Activated CD8-positive, alpha-beta T cell treated with anti-CD3 and anti-CD28 coated beads, Interleukin-2, amount 10 ng/mL, durations not matched to agents 7 days and 5 days (primary cell): ENCODE measurements at regions of chr5 and their contacts with region 1.

Region 1: GRCh38 chr5:131270809-131271208 is 7.0 kb downstream of the CDC42SE2 start:
- DNase-seq: no peak
- ATAC-seq: no peak
- H3K4me3 Mint-ChIP-seq: peak overlapping the region; percentile 73
- H3K27ac Mint-ChIP-seq: peak overlapping the region; percentile 80
- H3K4me1 Mint-ChIP-seq: peaks cover 74% of the 10 kb centered on the region
- H3K27me3 Mint-ChIP-seq: no peaks in the 10 kb centered on the region

Region 2: GRCh38 chr5:131165119-131165727 is 105.6 kb before region 1 on chr5 and contains the start of gene HINT1:
- CTCF ChIA-PET with region 1: interaction called, 11 read pairs
- POLR2A ChIA-PET with region 1: interaction called, 39 read pairs
- DNase-seq: peak; percentile 94
- ATAC-seq: peak; percentile 90
- H3K4me3 Mint-ChIP-seq: peak within 1 kb of the TSS; percentile 96
- H3K27ac Mint-ChIP-seq: peak within 1 kb of the TSS; percentile 98
- H3K4me1 Mint-ChIP-seq: peaks cover 49% of the 10 kb centered on the region
- H3K27me3 Mint-ChIP-seq: no peaks in the 10 kb centered on the region
- total RNA-seq, gene HINT1: 232 to 246 TPM

Region 3: DNA sequence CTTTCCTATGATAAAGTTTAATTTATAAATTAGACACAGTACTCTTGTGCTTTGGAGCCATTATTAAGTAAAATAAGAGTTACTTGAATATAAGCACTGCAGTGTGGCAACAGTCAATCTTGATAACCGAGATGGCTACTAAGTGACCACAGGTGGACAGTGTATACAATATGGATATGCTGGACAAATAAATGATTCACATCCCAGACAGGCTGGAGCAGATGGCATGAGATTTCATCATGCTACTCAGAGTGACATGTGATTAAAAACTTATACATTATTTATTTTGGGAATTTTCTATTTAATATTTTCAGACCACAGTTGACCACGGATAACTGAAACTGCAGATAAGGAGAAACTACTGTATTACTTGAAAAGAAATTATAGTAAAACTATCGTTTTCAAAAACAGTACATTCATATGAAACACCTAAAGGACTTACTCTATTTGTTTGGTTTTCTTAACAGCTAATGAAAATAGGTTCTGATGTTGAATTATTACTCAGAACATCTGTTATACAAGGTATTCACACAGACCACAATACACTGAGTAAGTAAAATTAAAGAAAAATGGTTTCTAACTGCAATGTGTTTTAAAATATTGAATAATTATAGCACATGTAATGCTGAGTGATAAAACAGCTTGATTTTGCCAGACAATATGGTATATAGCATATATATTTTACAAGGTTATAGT is 84.1 kb before region 1 on chr5:
- CTCF ChIA-PET with region 1: no interaction called
- POLR2A ChIA-PET with region 1: no interaction called
- DNase-seq: no peak
- ATAC-seq: no peak
- H3K4me3 Mint-ChIP-seq: no peak overlapping the region
- H3K27ac Mint-ChIP-seq: no peak overlapping the region
- H3K4me1 Mint-ChIP-seq: peaks cover 7% of the 10 kb centered on the region
- H3K27me3 Mint-ChIP-seq: no peaks in the 10 kb centered on the region

Region 4: GRCh38 chr5:131289738-131290137 is 18.9 kb after region 1 on chr5:
- CTCF ChIA-PET with region 1: interaction called, 4 read pairs
- POLR2A ChIA-PET with region 1: interaction called, 44 read pairs
- DNase-seq: no peak
- ATAC-seq: peak; percentile 64
- H3K4me3 Mint-ChIP-seq: peak overlapping the region; percentile 77
- H3K27ac Mint-ChIP-seq: peak overlapping the region; percentile 88
- H3K4me1 Mint-ChIP-seq: peaks cover 72% of the 10 kb centered on the region
- H3K27me3 Mint-ChIP-seq: no peaks in the 10 kb centered on the region